ENCODE measurements at regions of chr17 and their contacts with region 1.

Region 1: GRCh38 chr17:28763804-28764266 is 20.0 kb downstream of the TRAF4 start:
- DNase-seq: peak in 1 of 2 experiments; percentile 62
- H3K4me3 ChIP-seq: no peak overlapping the region
- H3K27ac ChIP-seq: no peak overlapping the region
- H3K4me1 ChIP-seq: peaks cover 15% of the 10 kb centered on the region
- H3K27me3 ChIP-seq: no peaks in the 10 kb centered on the region
- CTCF ChIP-seq: peak; percentile 95

Region 2: GRCh38 chr17:28726226-28727130 is 37.4 kb before region 1 on chr17 and contains the start of gene TLCD1:
- CTCF ChIA-PET with region 1: interaction called, 13 read pairs
- POLR2A ChIA-PET with region 1: interaction called, 4 read pairs
- intact Hi-C with region 1: no loop called
- DNase-seq: peak; percentile 89 to 96
- H3K4me3 ChIP-seq: peak within 1 kb of the TSS; percentile 87
- H3K27ac ChIP-seq: peak within 1 kb of the TSS; percentile 97
- H3K4me1 ChIP-seq: peaks cover 50% of the 10 kb centered on the region
- H3K27me3 ChIP-seq: no peaks in the 10 kb centered on the region
- CTCF ChIP-seq: peak; percentile 98
- total RNA-seq, gene TLCD1: 14.7 and 19.4 TPM in 2 replicates

Region 3: GRCh38 chr17:28842282-28843012 is 78.6 kb after region 1 on chr17 and contains the start of gene FAM222B:
- CTCF ChIA-PET with region 1: interaction called, 18 read pairs
- POLR2A ChIA-PET with region 1: no interaction called
- intact Hi-C with region 1: no loop called
- DNase-seq: peak; percentile 63 to 84
- H3K4me3 ChIP-seq: peak within 1 kb of the TSS; percentile 89
- H3K27ac ChIP-seq: 0 out of 2 replicates have a peak within 1 kb of the TSS, but pooled peaks have one; percentile 20
- H3K4me1 ChIP-seq: peaks cover 12% of the 10 kb centered on the region
- H3K27me3 ChIP-seq: no peaks in the 10 kb centered on the region
- CTCF ChIP-seq: no peak
- total RNA-seq, gene FAM222B: 14.2 and 26.4 TPM in 2 replicates

Region 4: GRCh38 chr17:28896884-28897768 is 133.3 kb after region 1 on chr17 and contains the start of gene FLOT2:
- CTCF ChIA-PET with region 1: interaction called, 5 read pairs
- POLR2A ChIA-PET with region 1: interaction called, 11 read pairs
- intact Hi-C with region 1: loop called (anchors 5 kb)
- DNase-seq: peak in 1 of 2 experiments; percentile 58
- H3K4me3 ChIP-seq: peak within 1 kb of the TSS; percentile 80
- H3K27ac ChIP-seq: no peak within 1 kb of the TSS
- H3K4me1 ChIP-seq: peaks cover 28% of the 10 kb centered on the region
- H3K27me3 ChIP-seq: no peaks in the 10 kb centered on the region
- CTCF ChIP-seq: no peak
- total RNA-seq, gene FLOT2: 118 and 128 TPM in 2 replicates

Region 5: GRCh38 chr17:29212681-29213121 is 448.9 kb after region 1 on chr17:
- CTCF ChIA-PET with region 1: no interaction called
- POLR2A ChIA-PET with region 1: no interaction called
- intact Hi-C with region 1: no loop called
- DNase-seq: no peak
- H3K4me3 ChIP-seq: no peak overlapping the region
- H3K27ac ChIP-seq: no peak overlapping the region
- H3K4me1 ChIP-seq: peaks cover 9% of the 10 kb centered on the region
- H3K27me3 ChIP-seq: no peaks in the 10 kb centered on the region
- CTCF ChIP-seq: no peak